Activated CD4-positive, alpha-beta memory T cell treated with anti-CD3 and anti-CD28 coated beads, Interleukin-2, amount 10 ng/mL, durations not matched to agents 7 days and 5 days (primary cell): ENCODE measurements at regions of chr14 and their contacts with region 1.

Region 1: GRCh38 chr14:34098045-34098984 is 147.4 kb upstream of the EGLN3 start:
- DNase-seq: peak; percentile 39
- H3K4me3 Mint-ChIP-seq: no peak overlapping the region
- H3K27ac Mint-ChIP-seq: no peak overlapping the region
- H3K4me1 Mint-ChIP-seq: peaks cover 22% of the 10 kb centered on the region
- H3K27me3 Mint-ChIP-seq: no peaks in the 10 kb centered on the region

Region 2: DNA sequence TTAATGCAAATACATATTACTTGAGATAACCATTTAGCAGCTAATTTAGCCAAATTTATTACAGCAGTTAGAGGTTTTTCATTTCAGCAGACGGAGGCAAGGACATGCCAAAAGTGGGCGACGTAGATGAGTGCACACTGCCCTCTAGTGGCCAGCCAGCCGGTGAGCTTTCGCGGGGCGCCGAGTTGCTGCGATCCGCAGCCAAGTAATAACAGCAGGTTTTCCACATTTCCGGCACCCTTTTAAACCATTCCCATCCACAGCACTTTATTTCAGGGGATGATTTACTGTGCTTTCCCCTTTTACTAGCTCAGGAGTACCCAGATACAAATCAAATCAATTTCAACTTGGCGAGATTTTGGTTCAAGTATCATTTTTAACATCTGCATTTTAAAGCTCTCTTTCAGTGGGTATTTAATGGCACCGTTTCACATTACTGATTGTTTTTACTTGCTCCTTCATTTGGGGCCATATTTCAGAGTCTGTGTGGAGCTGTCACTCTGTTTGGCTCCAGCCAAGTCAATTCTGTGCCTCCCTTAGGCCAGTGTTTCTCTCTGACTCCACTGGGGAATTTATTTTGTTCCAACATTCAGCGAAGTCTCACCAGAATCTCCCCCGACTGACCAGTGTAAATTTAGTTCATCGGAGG is 305.5 kb before region 1 on chr14:
- CTCF ChIA-PET with region 1: interaction called, 11 read pairs
- POLR2A ChIA-PET with region 1: no interaction called
- DNase-seq: peak; percentile 71
- H3K4me3 Mint-ChIP-seq: peak overlapping the region; percentile 39
- H3K27ac Mint-ChIP-seq: no peak overlapping the region
- H3K4me1 Mint-ChIP-seq: peaks cover 23% of the 10 kb centered on the region
- H3K27me3 Mint-ChIP-seq: peaks cover 22% of the 10 kb centered on the region

Region 3: DNA sequence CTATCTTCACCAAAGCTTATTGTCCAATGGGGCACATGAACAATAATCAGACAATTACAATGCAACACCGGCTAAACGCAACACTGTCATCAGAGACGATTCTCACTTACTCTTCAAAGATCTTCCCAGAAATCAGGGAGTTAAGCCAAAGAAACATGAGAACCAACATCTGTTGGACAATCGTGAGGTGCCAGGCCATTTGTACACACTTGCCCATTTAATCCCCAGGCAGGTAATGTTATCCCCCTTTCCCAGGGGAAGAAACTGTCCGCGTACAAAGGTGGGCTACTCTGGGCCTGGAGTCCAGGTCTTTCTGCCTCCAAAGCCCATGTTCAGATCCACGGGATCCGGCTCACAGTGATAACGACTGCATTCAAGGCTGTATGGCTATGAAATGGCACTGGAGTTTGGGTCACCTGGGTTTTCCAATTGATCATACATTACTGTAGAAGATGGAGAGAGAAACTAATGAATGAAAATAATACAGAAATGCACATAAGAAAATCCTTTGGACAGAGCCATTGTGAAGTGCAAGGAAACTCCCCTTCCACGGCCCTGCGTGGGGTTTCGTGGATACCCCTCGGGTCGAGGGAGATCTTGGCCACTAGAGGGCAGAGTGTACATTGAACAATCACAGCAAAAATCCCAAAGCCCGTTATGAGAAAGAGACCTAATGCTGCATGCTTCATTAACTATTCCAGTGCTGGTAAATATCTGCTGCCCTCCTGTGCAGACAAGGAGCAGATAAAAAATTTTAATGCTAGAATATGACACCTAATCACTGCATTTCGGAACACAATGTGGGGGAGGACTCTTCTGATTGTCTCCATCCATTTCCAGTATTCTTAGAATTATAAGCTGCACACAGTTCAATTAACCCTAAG is 258.9 kb before region 1 on chr14:
- CTCF ChIA-PET with region 1: interaction called, 58 read pairs
- POLR2A ChIA-PET with region 1: no interaction called
- DNase-seq: peak; percentile 61
- H3K4me3 Mint-ChIP-seq: no peak overlapping the region
- H3K27ac Mint-ChIP-seq: no peak overlapping the region
- H3K4me1 Mint-ChIP-seq: peaks cover 7% of the 10 kb centered on the region
- H3K27me3 Mint-ChIP-seq: no peaks in the 10 kb centered on the region

Region 4: DNA sequence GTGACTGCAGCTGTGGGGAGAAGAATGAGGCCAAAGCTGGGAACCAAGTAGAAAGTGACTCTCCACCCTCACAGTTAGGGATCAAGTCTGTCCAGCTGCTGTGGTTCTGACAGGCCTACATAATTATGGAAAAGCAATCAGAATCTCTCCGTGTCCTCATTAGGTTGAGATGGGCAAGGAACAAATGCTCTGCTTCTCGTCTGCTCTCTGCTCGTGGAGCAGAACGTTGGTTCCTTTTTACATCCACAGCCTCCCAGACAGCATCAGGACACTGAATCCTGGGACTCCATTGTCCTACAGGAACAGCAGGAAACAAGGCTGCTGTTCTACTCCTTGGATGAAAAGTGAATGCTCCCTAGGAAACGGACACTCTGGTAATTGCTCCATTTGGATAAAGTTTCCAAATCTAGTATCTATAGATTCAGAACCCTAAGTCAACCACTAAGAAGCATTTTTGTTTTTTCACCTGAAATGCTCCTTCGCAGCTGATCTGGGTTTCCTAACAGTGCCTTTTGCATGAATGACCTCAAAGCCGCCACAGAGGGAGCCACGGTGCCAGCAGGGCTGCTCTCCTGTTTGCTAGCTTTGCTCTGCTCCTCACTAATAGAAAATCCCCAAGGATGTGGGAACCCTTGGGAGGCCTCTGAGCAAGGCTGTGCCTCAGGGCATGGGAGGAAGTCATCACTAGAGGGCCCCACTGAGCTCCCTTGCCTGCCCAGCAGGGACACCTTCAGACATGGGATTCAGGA is 249.4 kb before region 1 on chr14:
- CTCF ChIA-PET with region 1: interaction called, 58 read pairs
- POLR2A ChIA-PET with region 1: no interaction called
- DNase-seq: peak; percentile 27
- H3K4me3 Mint-ChIP-seq: no peak overlapping the region
- H3K27ac Mint-ChIP-seq: no peak overlapping the region
- H3K4me1 Mint-ChIP-seq: peaks cover 7% of the 10 kb centered on the region
- H3K27me3 Mint-ChIP-seq: peaks cover 6% of the 10 kb centered on the region

Region 5: DNA sequence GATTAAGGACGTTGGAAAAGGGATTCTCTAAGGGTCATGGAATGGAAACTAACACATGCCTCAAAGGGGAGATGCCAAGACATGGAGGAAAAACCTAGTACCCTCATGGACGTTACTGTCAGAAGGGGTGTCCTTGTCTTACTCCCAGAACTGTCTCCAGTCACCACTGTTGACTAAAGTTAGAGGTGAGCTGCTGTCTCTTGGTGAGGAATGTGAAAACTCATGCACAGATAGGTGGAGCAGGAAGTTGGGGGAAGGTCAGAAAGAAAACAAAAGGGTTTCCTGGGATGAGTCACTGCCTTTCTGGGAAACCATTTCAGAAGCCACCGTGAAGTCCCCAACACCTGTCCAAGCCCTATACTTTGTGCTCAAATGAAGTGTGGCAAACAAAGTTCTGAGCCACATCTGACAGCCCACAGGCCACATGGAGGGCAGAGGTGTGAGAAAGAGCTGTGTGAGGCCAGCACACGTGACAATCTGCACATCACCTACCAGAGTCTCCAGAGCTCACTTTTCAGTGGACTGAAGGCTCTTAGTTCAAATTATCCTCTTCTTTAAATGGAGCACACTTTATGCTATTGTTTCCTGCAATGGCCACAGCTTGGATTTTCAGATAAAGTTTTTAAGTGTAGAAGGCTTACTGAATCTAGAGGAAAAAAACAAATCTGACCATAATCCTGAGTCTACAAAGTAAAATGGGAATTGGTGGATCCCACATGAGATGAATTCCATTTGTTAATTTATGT is 54.5 kb before region 1 on chr14:
- CTCF ChIA-PET with region 1: interaction called, 13 read pairs
- POLR2A ChIA-PET with region 1: interaction called, 3 read pairs
- DNase-seq: peak; percentile 92
- H3K4me3 Mint-ChIP-seq: peak overlapping the region; percentile 26
- H3K27ac Mint-ChIP-seq: peak overlapping the region; percentile 84
- H3K4me1 Mint-ChIP-seq: peaks cover 61% of the 10 kb centered on the region
- H3K27me3 Mint-ChIP-seq: peaks cover under 1% of the 10 kb centered on the region

Region 6: GRCh38 chr14:34059855-34060638 is 38.3 kb before region 1 on chr14:
- CTCF ChIA-PET with region 1: interaction called, 11 read pairs
- POLR2A ChIA-PET with region 1: interaction called, 3 read pairs
- DNase-seq: peak; percentile 76
- H3K4me3 Mint-ChIP-seq: peak overlapping the region; percentile 78
- H3K27ac Mint-ChIP-seq: peak overlapping the region; percentile 80
- H3K4me1 Mint-ChIP-seq: peaks cover 40% of the 10 kb centered on the region
- H3K27me3 Mint-ChIP-seq: peaks cover 15% of the 10 kb centered on the region

Region 7: DNA sequence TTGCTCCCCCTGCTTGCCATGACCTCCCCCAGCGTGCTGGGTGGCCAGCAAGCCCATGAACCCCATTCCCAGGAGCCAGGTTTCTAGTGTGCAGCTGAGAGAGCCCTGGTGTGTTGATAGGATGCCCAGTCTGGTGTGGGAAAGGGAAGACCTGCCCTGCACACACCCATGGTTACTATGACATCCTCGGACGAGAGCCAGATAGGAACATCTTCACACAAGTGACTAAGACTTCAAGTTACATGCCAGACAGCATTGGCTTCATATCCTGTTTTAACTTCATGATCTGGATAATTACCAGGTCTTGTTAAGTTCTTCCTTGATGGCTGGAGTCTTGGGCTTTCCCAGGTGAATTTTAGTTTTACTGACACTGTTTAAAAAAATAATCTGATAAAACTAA is 49.1 kb after region 1 on chr14:
- CTCF ChIA-PET with region 1: no interaction called
- POLR2A ChIA-PET with region 1: no interaction called
- DNase-seq: no peak
- H3K4me3 Mint-ChIP-seq: no peak overlapping the region
- H3K27ac Mint-ChIP-seq: no peak overlapping the region
- H3K4me1 Mint-ChIP-seq: no peaks in the 10 kb centered on the region
- H3K27me3 Mint-ChIP-seq: peaks cover 2% of the 10 kb centered on the region

Region 8: GRCh38 chr14:34227834-34228649 is 129.7 kb after region 1 on chr14:
- CTCF ChIA-PET with region 1: interaction called, 12 read pairs
- POLR2A ChIA-PET with region 1: no interaction called
- DNase-seq: peak; percentile 67
- H3K4me3 Mint-ChIP-seq: peak overlapping the region; percentile 34
- H3K27ac Mint-ChIP-seq: no peak overlapping the region
- H3K4me1 Mint-ChIP-seq: peaks cover 12% of the 10 kb centered on the region
- H3K27me3 Mint-ChIP-seq: peaks cover 19% of the 10 kb centered on the region

Region 9: GRCh38 chr14:34329301-34329700 is 231.0 kb after region 1 on chr14:
- CTCF ChIA-PET with region 1: no interaction called
- POLR2A ChIA-PET with region 1: no interaction called
- DNase-seq: no peak
- H3K4me3 Mint-ChIP-seq: no peak overlapping the region
- H3K27ac Mint-ChIP-seq: no peak overlapping the region
- H3K4me1 Mint-ChIP-seq: peaks cover 8% of the 10 kb centered on the region
- H3K27me3 Mint-ChIP-seq: no peaks in the 10 kb centered on the region